Tibial artery (tissue), 4 donors: ENCODE measurements at regions of chr19 and their contacts with region 1.

Region 1: GRCh38 chr19:38245826-38246498 is 10.2 kb downstream of the PPP1R14A start:
- DNase-seq: peak; percentile 60 to 85
- H3K4me3 ChIP-seq: peak overlapping the region; percentile 27
- H3K27ac ChIP-seq: peak overlapping the region; percentile 95 to 96
- H3K4me1 ChIP-seq: peaks cover 0 to 78% (median 54%) of the 10 kb centered on the region in 4 donors
- H3K27me3 ChIP-seq: no peaks in the 10 kb centered on the region
- CTCF ChIP-seq: no peak

Region 2: DNA sequence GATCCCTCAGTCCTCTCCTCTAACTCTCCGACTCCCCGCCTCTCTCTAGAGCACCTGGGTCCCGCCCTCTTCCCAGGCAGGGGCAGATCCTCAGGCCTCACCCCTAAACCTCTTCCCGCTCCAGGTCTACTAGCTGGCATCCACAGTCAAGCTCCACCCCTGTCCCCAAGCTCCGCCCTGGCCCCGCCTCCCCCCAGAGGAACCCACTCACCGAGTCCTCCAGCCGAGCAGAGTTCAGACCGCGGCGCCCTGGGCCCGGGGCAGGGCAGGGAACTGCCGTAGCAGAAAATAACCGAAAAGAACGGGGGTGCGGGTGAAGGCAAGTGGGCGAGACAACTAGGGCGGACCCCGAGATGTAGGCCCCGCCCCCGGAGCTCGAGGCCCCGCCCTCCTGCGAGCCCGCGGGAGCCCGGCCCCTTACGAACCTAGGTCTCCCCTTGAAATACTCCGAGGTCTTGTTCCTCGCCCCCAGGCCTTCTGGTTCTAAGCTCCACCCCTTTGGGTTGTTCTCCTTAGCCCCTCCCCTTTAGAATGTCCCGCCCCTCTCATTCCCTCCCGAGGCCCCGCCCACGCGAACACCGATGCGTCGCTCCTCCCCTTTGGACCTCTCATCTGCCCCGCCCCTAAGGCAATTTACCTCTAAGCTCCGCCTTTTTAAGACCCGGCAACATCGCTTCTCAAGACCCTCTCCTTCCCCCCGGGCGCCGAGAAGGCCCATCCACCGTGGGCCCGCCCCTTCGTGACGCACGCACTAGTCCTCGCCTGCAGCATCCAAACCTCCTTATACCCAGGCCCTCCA is 141.8 kb after region 1 on chr19 and contains the start of gene GGN:
- intact Hi-C with region 1: loop called (anchors 5 kb)
- DNase-seq: peak; percentile 80 to 90
- H3K4me3 ChIP-seq: peak within 1 kb of the TSS; percentile 54 to 73
- H3K27ac ChIP-seq: peak within 1 kb of the TSS; percentile 84 to 86
- H3K4me1 ChIP-seq: peaks cover 5 to 45% (median 34%) of the 10 kb centered on the region in 4 donors
- H3K27me3 ChIP-seq: no peaks in the 10 kb centered on the region
- CTCF ChIP-seq: no peak

Region 3: DNA sequence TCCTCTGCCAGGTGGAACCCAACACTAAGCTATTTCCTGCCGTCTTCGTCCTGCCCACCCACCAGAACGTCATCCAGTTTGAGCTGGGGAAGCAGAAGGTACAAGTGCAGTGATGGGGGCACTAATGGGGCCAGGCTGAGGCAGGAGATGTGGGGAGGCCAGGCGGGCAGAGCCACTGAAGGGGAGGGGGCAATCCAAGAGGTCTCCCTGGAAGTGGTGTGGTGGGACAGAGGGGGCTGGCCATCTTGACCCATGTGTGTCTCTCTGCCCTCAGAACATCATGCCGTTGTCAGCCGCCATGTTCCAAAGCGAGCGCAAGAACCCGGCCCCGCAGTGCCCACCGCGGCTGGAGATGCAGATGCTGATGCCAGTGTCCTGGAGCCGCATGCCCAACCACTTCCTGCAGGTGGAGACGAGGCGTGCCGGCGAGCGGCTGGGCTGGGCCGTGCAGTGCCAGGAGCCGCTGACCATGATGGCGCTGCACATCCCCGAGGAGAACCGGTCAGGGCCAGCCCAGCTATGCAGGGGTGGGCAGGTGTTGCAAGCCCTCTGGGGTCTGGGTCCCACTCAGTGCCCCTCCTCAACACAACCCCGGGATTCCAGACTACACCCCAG is 237.2 kb after region 1 on chr19:
- intact Hi-C with region 1: no loop called
- DNase-seq: no peak
- H3K4me3 ChIP-seq: no peak overlapping the region
- H3K27ac ChIP-seq: no peak overlapping the region
- H3K4me1 ChIP-seq: no peaks in the 10 kb centered on the region
- H3K27me3 ChIP-seq: peaks cover 0 to 19% of the 10 kb centered on the region in 2 donors
- CTCF ChIP-seq: no peak